ENCODE measurements at regions of chr4 and their contacts with region 1.

Region 1: DNA sequence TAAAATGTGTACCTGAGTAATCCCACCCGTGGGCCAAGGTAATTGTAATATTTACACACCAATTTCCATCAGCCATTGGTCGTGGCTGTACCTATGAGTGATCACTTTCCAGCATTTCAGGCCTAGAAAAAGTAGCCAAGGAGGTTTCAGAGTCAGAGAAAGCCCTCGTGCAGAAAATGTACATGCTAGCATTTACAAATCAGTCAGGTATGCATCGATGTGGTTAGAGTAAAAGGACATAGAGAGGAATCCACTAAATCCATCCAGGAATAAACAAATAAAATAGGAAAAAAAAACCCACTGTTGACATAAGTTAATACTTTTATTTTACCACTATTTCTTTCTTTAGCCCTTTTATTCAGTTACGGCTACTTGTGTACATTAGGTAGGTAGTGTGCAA is 256.8 kb downstream of the TRIML1 start:
- DNase-seq: peak; percentile 67
- ATAC-seq: peak; percentile 65
- H3K4me3 ChIP-seq: no peak overlapping the region
- H3K27ac ChIP-seq: no peak overlapping the region
- H3K4me1 ChIP-seq: peaks cover 2% of the 10 kb centered on the region
- H3K27me3 ChIP-seq: no peaks in the 10 kb centered on the region
- CTCF ChIP-seq: no peak
- POLR2A ChIP-seq: no peak
- RAD21 ChIP-seq: no peak

Region 2: GRCh38 chr4:188297873-188298272 is 98.2 kb before region 1 on chr4:
- CTCF ChIA-PET with region 1: no interaction called
- POLR2A ChIA-PET with region 1: interaction called, 11 read pairs
- dilution Hi-C with region 1: no loop called
- in situ Hi-C with region 1: no loop called
- intact Hi-C with region 1: no loop called
- DNase-seq: peak; percentile 85
- ATAC-seq: peak; percentile 82
- H3K4me3 ChIP-seq: no peak overlapping the region
- H3K27ac ChIP-seq: no peak overlapping the region
- H3K4me1 ChIP-seq: peaks cover 2% of the 10 kb centered on the region; the same call in 1 of the 2 replicates
- H3K27me3 ChIP-seq: no peaks in the 10 kb centered on the region
- CTCF ChIP-seq: no peak
- POLR2A ChIP-seq: no peak
- RAD21 ChIP-seq: no peak